Kidney (tissue), 22 donors: ENCODE measurements at regions of chr11 and their contacts with region 1.

Region 1: GRCh38 chr11:6389921-6390724 is at the start of gene SMPD1:
- DNase-seq: peak; percentile 91 to 98 (median 94)
- H3K4me3 ChIP-seq: peak within 1 kb of the TSS; percentile 66 to 94 (median 82)
- H3K27ac ChIP-seq: peak within 1 kb of the TSS; percentile 81 to 94
- H3K4me1 ChIP-seq: peaks cover 6 to 11% (median 8%) of the 10 kb centered on the region in 3 donors
- H3K27me3 ChIP-seq: no peaks in the 10 kb centered on the region
- CTCF ChIP-seq: no peak
- total RNA-seq, gene SMPD1: 76.0 TPM

Region 2: GRCh38 chr11:6505577-6506240 is 115.6 kb after region 1 on chr11:
- intact Hi-C with region 1: loop called (anchors 10 kb)
- DNase-seq: peak in 3 of 5 donors; percentile 22 to 77 (median 67)
- H3K4me3 ChIP-seq: no peak overlapping the region
- H3K27ac ChIP-seq: no peak overlapping the region
- H3K4me1 ChIP-seq: no peaks in the 10 kb centered on the region
- H3K27me3 ChIP-seq: no peaks in the 10 kb centered on the region
- CTCF ChIP-seq: peak; percentile 58